HEK293 (cell line): ENCODE measurements at regions of chr19 and their contacts with region 1.

Region 1: GRCh38 chr19:54115109-54116063 is at the starts of genes PRPF31 and TFPT:
- H3K4me3 ChIP-seq: peak within 1 kb of the TSS; percentile 95
- H3K27ac ChIP-seq: peak within 1 kb of the TSS; percentile 80
- H3K4me1 ChIP-seq: peaks cover 7% of the 10 kb centered on the region
- CTCF ChIP-seq: 0 out of 2 replicates have a peak, but pooled peaks have one; percentile 42

Region 2: DNA sequence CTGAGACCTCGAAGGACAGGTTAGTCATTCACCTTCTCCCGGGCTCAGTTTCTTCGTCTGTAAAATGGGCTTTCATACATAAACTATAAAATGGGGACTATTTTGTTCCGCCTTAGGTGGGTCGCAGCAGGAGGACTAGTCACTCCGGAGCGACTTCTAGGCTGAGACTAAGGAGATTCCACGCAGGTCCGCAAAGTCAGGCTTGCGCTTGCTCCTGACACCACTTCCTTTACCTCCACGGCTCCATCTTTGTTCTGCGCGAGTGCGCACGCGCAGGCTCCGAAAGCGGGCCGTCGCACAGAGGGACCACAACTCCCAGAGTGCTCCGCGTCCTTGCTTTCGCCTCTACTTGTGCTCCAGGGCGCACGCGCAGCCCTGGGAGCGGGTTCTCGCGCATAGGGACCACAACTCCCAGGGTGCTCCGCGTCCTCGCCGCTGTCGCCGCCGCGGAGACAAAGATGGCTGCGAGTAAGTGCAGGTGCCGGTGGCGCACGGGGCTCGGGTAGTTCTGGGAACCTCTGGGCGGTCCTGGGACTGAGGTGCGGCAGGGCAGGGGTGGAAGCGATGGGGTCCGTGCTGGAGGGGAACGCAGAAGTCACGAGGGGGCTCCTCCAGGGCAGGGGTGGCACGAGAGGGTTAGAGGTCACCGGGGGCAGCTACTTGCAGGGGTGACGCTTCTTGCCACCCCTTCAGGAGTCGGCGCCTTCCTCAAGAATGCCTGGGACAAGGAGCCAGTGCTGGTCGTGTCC is 12.8 kb before region 1 on chr19 and contains the start of gene NDUFA3:
- CTCF ChIA-PET with region 1: interaction called, 4 read pairs
- POLR2A ChIA-PET with region 1: interaction called, 29 read pairs
- H3K4me3 ChIP-seq: peak within 1 kb of the TSS; percentile 97
- H3K27ac ChIP-seq: peak within 1 kb of the TSS; percentile 63; the same call in 1 of the 2 replicates
- H3K4me1 ChIP-seq: peaks cover 2% of the 10 kb centered on the region; the same call in 1 of the 2 replicates
- CTCF ChIP-seq: 0 out of 2 replicates have a peak, but pooled peaks have one; percentile 18

Region 3: GRCh38 chr19:54149021-54149802 is 33.8 kb after region 1 on chr19:
- CTCF ChIA-PET with region 1: no interaction called
- POLR2A ChIA-PET with region 1: no interaction called
- H3K4me3 ChIP-seq: no peak overlapping the region
- H3K27ac ChIP-seq: no peak overlapping the region
- H3K4me1 ChIP-seq: no peaks in the 10 kb centered on the region
- CTCF ChIP-seq: no peak

Region 4: DNA sequence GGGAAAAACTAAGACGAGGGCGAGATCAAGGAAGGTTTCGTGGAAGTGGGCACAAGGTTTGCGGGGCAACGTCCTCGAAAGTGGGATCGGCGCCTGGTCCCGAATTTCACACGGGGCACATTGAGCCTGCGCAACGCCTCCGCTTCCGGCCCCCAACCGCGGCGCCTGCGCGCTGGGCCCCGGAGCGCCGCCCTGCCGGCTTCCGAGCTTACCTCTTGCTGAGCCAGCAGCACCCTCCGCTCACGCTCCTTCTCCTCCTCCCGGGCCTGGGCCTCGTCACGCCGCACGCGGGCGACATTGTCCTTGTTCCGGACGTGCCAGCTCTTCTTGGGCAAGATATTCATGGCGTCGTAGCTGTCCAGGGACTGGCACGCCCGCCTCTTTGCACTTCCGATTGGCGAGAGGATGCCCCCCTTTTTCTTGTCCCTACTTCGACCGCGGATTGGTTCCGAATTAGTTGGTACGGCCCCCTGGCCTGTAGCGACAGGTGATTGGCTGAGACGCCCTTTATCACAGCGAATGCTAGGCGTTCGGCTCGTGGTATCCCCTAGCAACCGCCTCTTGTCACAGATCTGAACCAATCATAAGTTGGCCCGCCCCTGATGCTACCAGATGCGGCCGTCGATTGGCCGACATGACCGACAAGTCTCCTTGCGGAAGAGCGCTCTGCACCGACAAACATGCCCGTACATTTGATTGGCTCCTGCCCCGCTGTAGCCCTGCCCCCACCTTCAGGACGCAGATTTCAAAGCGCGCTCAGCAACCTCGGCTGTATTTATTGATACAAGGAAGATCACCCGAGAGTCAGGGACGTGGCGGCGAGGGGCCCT is 44.2 kb after region 1 on chr19 and contains the start of gene LENG1:
- CTCF ChIA-PET with region 1: interaction called, 6 read pairs
- POLR2A ChIA-PET with region 1: interaction called, 11 read pairs
- H3K4me3 ChIP-seq: peak within 1 kb of the TSS; percentile 96
- H3K27ac ChIP-seq: peak within 1 kb of the TSS; percentile 78
- H3K4me1 ChIP-seq: peaks cover 4% of the 10 kb centered on the region; the same call in 1 of the 2 replicates
- CTCF ChIP-seq: peak; percentile 90

Region 5: GRCh38 chr19:54172471-54173358 is 57.3 kb after region 1 on chr19 and contains the start of gene TMC4:
- CTCF ChIA-PET with region 1: no interaction called
- POLR2A ChIA-PET with region 1: no interaction called
- H3K4me3 ChIP-seq: peak within 1 kb of the TSS; percentile 41
- H3K27ac ChIP-seq: no peak within 1 kb of the TSS
- H3K4me1 ChIP-seq: no peaks in the 10 kb centered on the region
- CTCF ChIP-seq: no peak

Region 6: DNA sequence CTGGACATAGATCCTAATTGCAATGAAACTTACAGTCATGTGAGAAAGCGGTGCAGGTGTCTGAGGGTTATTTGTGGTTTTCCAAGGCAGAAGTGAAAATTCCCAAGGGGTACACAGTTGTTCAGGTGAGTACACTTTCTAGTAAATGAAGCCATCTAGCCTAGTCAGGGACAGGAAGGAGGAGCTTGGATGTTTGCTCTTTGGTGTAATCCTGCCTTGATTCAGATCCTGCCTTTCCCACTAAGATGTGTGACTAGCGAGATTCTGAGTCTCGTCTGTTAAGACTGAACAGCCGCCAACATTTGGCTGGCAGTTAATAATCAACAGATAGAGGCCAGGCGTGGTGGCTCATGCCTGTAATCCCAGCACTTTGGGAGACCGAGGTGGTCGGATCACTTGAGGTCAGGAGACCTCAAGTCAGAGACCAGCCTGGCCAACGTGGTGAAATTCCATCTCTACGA is 87.8 kb after region 1 on chr19:
- CTCF ChIA-PET with region 1: no interaction called
- POLR2A ChIA-PET with region 1: interaction called, 11 read pairs
- H3K4me3 ChIP-seq: no peak overlapping the region
- H3K27ac ChIP-seq: no peak overlapping the region
- H3K4me1 ChIP-seq: peaks cover 10% of the 10 kb centered on the region
- CTCF ChIP-seq: no peak

Region 7: GRCh38 chr19:54231077-54231931 is 115.9 kb after region 1 on chr19:
- CTCF ChIA-PET with region 1: no interaction called
- POLR2A ChIA-PET with region 1: no interaction called
- H3K4me3 ChIP-seq: no peak overlapping the region
- H3K27ac ChIP-seq: no peak overlapping the region
- H3K4me1 ChIP-seq: peaks cover 2% of the 10 kb centered on the region; the same call in 1 of the 2 replicates
- CTCF ChIP-seq: peak; percentile 95